T-cell (primary cell): ENCODE measurements at regions of chr13 and their contacts with region 1.

Region 1: GRCh38 chr13:48126944-48127830 is 32.3 kb upstream of the MED4 start:
- DNase-seq: peak in 34 of 35 experiments; percentile 2 to 82 (median 31)
- ATAC-seq: peak; percentile 81 to 94 (median 92)
- H3K4me3 ChIP-seq: no peak overlapping the region
- H3K4me3 Mint-ChIP-seq: peak overlapping the region; percentile 25 to 39 (median 35)
- H3K27ac ChIP-seq: peak overlapping the region; percentile 68
- H3K27ac Mint-ChIP-seq: peak overlapping the region; percentile 87 to 91
- H3K4me1 ChIP-seq: peaks cover 8 to 13% of the 10 kb centered on the region in 2 experiments
- H3K4me1 Mint-ChIP-seq: peaks cover 23 to 32% (median 32%) of the 10 kb centered on the region in 3 donors
- H3K27me3 ChIP-seq: no peaks in the 10 kb centered on the region
- H3K27me3 Mint-ChIP-seq: peaks cover 0 to under 1% of the 10 kb centered on the region in 2 donors

Region 2: DNA sequence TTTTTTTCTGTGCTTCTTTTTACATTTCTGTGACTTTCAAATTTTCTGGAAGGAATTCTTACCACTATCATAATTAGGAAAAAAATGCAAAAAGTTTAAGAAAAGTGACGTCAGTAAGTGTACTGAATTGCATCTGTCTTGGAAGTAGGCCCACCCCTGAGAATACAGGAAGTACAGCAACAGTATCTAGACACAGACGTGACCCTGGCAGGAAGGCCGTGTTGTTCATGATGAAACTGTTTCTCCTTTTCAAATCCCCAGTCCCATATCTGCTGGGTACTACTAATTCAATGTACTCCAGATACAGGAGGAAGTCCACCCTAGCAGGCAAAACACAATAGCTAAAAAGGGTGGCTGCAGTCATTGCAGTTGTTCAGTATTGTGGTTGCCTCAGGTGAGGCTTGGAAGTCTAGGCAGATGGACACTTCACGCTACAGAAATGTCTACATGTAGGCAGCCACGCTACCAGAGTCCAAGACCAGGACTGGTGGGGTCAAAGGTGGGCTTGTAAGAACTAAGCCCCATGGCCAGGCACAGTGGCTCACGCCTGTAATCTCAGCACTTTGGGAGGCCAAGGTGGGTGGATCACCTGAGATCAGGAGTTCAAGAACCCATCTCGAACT is 17.3 kb after region 1 on chr13:
- CTCF ChIA-PET with region 1: no interaction called
- POLR2A ChIA-PET with region 1: interaction called, 4 to 11 read pairs
- DNase-seq: peak in 13 of 35 experiments; percentile 6 to 49 (median 26)
- ATAC-seq: peak; percentile 62 to 81 (median 68)
- H3K4me3 ChIP-seq: no peak overlapping the region
- H3K4me3 Mint-ChIP-seq: peak overlapping the region in 1 of 3 donors; percentile 22
- H3K27ac ChIP-seq: peak overlapping the region; percentile 73
- H3K27ac Mint-ChIP-seq: peak overlapping the region; percentile 3 to 81
- H3K4me1 ChIP-seq: peaks cover 6 to 18% of the 10 kb centered on the region in 2 experiments
- H3K4me1 Mint-ChIP-seq: peaks cover 30 to 46% (median 39%) of the 10 kb centered on the region in 3 donors
- H3K27me3 ChIP-seq: no peaks in the 10 kb centered on the region
- H3K27me3 Mint-ChIP-seq: no peaks in the 10 kb centered on the region

Region 3: GRCh38 chr13:48233046-48233907 is 106.1 kb after region 1 on chr13 and contains the start of gene ITM2B:
- CTCF ChIA-PET with region 1: interaction called, 7 to 28 read pairs
- POLR2A ChIA-PET with region 1: interaction called in 1 of 2 experiments, 3 read pairs
- DNase-seq: peak; percentile 34 to 81 (median 56)
- ATAC-seq: peak; percentile 83 to 88 (median 84)
- H3K4me3 ChIP-seq: peak within 1 kb of the TSS; percentile 82 to 100
- H3K4me3 Mint-ChIP-seq: peak within 1 kb of the TSS; percentile 88 to 96 (median 95)
- H3K27ac ChIP-seq: peak within 1 kb of the TSS; percentile 85
- H3K27ac Mint-ChIP-seq: peak within 1 kb of the TSS; percentile 98
- H3K4me1 ChIP-seq: peaks cover 21 to 30% of the 10 kb centered on the region in 2 experiments
- H3K4me1 Mint-ChIP-seq: peaks cover 49 to 59% (median 55%) of the 10 kb centered on the region in 3 donors
- H3K27me3 ChIP-seq: no peaks in the 10 kb centered on the region
- H3K27me3 Mint-ChIP-seq: no peaks in the 10 kb centered on the region
- total RNA-seq, gene ITM2B: 347 to 539 (median 452) TPM